Activated CD4-positive, alpha-beta memory T cell treated with anti-CD3 and anti-CD28 coated beads for 36 hours (primary cell): ENCODE measurements at regions of chr3 and their contacts with region 1.

Region 1: DNA sequence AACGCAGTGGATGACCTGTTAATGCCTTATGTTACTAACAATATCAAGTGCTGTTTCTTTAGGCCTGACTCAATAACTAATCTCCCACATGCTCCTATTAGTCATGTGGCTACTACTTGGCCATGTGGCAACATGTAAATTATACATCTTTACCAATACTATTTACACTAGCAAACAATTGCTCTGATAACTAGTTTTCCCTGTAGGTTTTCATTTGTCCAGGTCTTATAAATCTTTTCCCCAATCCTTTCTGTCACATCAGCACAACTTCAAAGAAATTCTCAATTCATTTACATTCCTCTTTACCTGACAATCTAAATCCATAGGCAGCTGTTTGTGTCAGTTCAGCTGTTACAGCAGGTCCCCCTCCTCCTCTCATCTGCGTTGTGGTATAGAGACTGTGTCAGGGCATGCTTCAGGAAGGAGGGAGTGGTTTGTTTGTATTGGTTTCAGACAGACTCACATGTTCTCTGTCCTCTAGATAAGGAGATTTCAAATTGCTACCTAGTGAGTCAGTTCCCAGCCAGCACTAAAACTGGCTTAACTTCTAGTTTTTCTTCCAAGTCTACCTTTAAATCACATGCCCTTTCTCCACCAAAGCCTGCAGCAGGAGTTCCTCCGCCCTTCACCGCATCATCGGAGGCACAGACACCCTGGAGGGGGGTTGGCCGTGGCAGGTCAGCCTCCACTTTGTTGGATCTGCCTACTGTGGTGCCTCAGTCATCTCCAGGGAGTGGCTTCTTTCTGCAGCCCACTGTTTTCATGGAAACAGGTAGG is 11.3 kb upstream of the C3orf52 start:
- DNase-seq: peak; percentile 68
- H3K4me3 Mint-ChIP-seq: peak overlapping the region; percentile 16
- H3K27ac Mint-ChIP-seq: peak overlapping the region; percentile 35
- H3K4me1 Mint-ChIP-seq: peaks cover 37% of the 10 kb centered on the region
- H3K27me3 Mint-ChIP-seq: no peaks in the 10 kb centered on the region

Region 2: GRCh38 chr3:112020674-112021085 is 54.2 kb before region 1 on chr3:
- CTCF ChIA-PET with region 1: no interaction called
- POLR2A ChIA-PET with region 1: no interaction called
- intact Hi-C with region 1: no loop called
- DNase-seq: no peak
- H3K4me3 Mint-ChIP-seq: no peak overlapping the region
- H3K27ac Mint-ChIP-seq: no peak overlapping the region
- H3K4me1 Mint-ChIP-seq: peaks cover 4% of the 10 kb centered on the region
- H3K27me3 Mint-ChIP-seq: no peaks in the 10 kb centered on the region

Region 3: GRCh38 chr3:112056451-112056978 is 18.4 kb before region 1 on chr3:
- CTCF ChIA-PET with region 1: no interaction called
- POLR2A ChIA-PET with region 1: no interaction called
- intact Hi-C with region 1: loop called (anchors 1 kb)
- DNase-seq: peak; percentile 53
- H3K4me3 Mint-ChIP-seq: peak overlapping the region; percentile 1
- H3K27ac Mint-ChIP-seq: peak overlapping the region; percentile 25
- H3K4me1 Mint-ChIP-seq: peaks cover 25% of the 10 kb centered on the region
- H3K27me3 Mint-ChIP-seq: peaks cover 11% of the 10 kb centered on the region

Region 4: DNA sequence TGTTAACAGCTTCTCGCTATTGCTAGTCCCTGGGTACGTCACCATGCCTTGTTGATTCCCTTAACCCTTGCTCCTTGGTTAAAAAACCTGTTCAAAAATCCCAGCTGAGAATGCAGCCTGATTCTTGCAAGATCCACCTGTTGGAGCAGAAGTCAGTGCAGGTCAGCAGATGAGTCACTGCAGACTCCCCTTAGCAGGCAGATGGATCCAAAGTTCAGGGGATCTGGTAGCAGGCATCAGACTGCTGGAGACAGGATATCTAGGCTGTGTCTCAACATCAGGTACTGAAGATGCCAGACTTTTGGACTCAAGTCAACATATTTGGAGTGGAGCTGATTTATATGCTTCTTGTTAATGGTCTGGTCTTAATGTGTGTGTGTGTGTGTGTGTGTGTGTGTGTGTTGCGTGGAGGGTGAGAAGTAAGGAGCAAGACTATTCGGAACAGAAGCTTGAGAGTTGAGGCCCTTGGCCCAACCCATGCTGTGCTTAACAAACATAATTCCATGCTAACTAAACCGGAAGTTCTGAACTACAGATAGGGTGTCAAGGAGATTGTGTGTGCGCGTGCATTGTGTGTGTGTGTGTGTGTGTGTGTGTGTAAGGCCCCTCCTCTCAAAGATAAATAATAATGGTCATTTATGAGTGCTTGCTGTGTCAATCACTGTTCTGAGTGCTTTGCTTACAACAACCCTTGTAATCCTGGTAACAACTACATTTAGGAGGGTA is 10.2 kb after region 1 on chr3:
- CTCF ChIA-PET with region 1: interaction called, 3 read pairs
- POLR2A ChIA-PET with region 1: no interaction called
- intact Hi-C with region 1: loop called (anchors 1 kb)
- DNase-seq: no peak
- H3K4me3 Mint-ChIP-seq: no peak overlapping the region
- H3K27ac Mint-ChIP-seq: no peak overlapping the region
- H3K4me1 Mint-ChIP-seq: peaks cover 16% of the 10 kb centered on the region
- H3K27me3 Mint-ChIP-seq: peaks cover 3% of the 10 kb centered on the region